MCF 10A (cell line): ENCODE measurements at regions of chr3 and their contacts with region 1.

Region 1: GRCh38 chr3:141959921-141960554 is 83.6 kb downstream of the ATP1B3 start:
- DNase-seq: peak; percentile 76
- H3K4me3 Mint-ChIP-seq: peak overlapping the region; percentile 10
- H3K27ac Mint-ChIP-seq: peak overlapping the region; percentile 87
- H3K4me1 Mint-ChIP-seq: peaks cover 12% of the 10 kb centered on the region
- H3K27me3 Mint-ChIP-seq: no peaks in the 10 kb centered on the region
- CTCF ChIP-seq: no peak

Region 2: GRCh38 chr3:141945741-141946485 is 14.1 kb before region 1 on chr3:
- CTCF ChIA-PET with region 1: interaction called, 4 read pairs
- POLR2A ChIA-PET with region 1: interaction called, 17 read pairs
- intact Hi-C with region 1: no loop called
- DNase-seq: no peak
- H3K4me3 Mint-ChIP-seq: no peak overlapping the region
- H3K27ac Mint-ChIP-seq: no peak overlapping the region
- H3K4me1 Mint-ChIP-seq: peaks cover 7% of the 10 kb centered on the region
- H3K27me3 Mint-ChIP-seq: no peaks in the 10 kb centered on the region
- CTCF ChIP-seq: no peak

Region 3: DNA sequence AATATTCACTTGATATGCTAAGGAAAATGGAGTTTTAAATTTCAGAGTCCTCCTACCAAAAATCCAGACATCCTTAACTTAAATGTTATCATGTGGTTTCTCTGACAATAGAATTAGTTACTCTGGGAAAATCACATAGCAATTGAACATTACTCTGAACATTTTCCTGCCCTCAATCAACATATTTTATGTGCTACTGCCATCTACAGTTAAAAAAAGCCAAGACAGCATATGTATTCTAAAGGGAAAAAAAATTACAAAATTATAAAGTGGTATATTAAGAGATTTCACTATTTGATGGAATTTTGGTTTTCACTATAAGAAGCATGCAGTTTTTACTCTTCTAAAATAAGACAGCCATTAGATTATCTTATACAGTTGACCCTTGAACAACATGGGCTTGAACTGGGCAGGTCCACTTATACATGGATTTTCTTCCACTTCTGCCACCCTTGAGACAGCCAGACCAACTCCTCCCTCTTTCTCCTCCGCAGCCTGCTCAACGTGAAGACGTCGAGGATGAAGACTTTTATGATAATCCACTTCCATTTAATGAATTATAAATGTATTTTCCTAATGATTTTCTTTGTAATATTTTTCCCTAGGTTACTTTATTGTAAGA is 38.7 kb after region 1 on chr3:
- CTCF ChIA-PET with region 1: no interaction called
- POLR2A ChIA-PET with region 1: interaction called, 4 read pairs
- intact Hi-C with region 1: loop called (anchors 1 kb)
- DNase-seq: peak; percentile 23
- H3K4me3 Mint-ChIP-seq: no peak overlapping the region
- H3K27ac Mint-ChIP-seq: no peak overlapping the region
- H3K4me1 Mint-ChIP-seq: no peaks in the 10 kb centered on the region
- H3K27me3 Mint-ChIP-seq: no peaks in the 10 kb centered on the region
- CTCF ChIP-seq: peak; percentile 35

Region 4: GRCh38 chr3:142028243-142028777 is 68.3 kb after region 1 on chr3:
- CTCF ChIA-PET with region 1: no interaction called
- POLR2A ChIA-PET with region 1: interaction called, 4 read pairs
- intact Hi-C with region 1: loop called (anchors 1 kb)
- DNase-seq: peak; percentile 74
- H3K4me3 Mint-ChIP-seq: peak overlapping the region; percentile 84
- H3K27ac Mint-ChIP-seq: peak overlapping the region; percentile 25
- H3K4me1 Mint-ChIP-seq: peaks cover 12% of the 10 kb centered on the region
- H3K27me3 Mint-ChIP-seq: no peaks in the 10 kb centered on the region
- CTCF ChIP-seq: no peak

Region 5: GRCh38 chr3:142148792-142149672 is 189.0 kb after region 1 on chr3 and contains the start of gene TFDP2:
- CTCF ChIA-PET with region 1: no interaction called
- POLR2A ChIA-PET with region 1: no interaction called
- intact Hi-C with region 1: no loop called
- DNase-seq: peak; percentile 90
- H3K4me3 Mint-ChIP-seq: peak within 1 kb of the TSS; percentile 80
- H3K27ac Mint-ChIP-seq: peak within 1 kb of the TSS; percentile 96
- H3K4me1 Mint-ChIP-seq: peaks cover 30% of the 10 kb centered on the region
- H3K27me3 Mint-ChIP-seq: no peaks in the 10 kb centered on the region
- CTCF ChIP-seq: no peak
- total RNA-seq, gene TFDP2: 38.4 and 43.2 TPM in 2 replicates